HEK293 (cell line): ENCODE measurements at regions of chr1 and their contacts with region 1.

Region 1: DNA sequence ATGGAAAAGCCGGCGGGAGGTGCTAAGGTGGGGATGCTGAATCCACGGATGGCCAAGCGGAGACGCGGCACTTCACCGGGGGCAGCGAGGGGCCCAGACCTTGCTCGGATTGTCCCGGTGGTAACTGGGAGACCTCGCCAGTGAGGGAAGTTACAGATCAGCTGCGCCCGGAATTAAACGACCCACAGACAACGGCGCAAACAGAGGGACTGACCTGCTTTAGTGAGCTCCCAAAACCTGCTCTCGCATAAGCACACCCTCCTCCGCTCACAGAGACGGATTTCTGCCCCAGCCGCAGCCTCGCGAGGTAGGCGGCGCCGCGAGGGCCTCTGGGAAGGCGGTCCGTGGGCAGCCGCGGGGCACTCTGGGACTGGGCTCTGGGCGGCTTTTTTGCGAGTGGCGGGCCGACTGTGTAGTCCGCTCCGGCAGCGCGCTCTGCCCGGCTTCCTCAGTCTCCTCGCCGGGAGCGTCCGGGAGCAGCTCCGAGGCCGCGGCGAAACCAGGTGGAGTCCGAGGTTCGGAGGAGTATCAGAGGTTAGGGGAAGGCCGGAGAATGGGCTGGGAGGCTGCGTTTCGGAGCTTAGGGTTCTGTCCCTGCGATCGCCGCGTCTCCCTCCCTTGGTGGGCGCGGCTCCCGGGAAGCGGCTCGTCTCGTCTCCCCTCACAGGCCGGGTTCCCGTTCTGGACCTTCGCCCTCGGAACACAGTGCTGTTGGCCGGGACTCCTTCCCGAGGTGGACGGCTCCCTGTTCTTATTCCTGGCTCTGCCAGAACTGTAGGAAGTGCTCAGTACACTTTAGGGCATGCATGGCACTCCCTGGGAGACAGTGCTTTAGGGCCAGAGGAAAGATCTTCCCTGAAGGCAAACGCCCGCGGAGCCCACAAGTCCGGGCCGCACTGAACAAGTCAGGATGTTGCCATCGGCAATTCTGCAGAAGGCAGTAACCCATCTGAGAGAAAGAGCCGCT is at the start of gene EXO5:
- H3K4me3 ChIP-seq: peak within 1 kb of the TSS; percentile 69
- H3K27ac ChIP-seq: peak within 1 kb of the TSS; percentile 26; the same call in 1 of the 2 replicates
- H3K4me1 ChIP-seq: no peaks in the 10 kb centered on the region
- CTCF ChIP-seq: 0 out of 2 replicates have a peak, but pooled peaks have one; percentile 18

Region 2: GRCh38 chr1:40449684-40450494 is 58.8 kb before region 1 on chr1 and contains the start of gene ZFP69B:
- CTCF ChIA-PET with region 1: no interaction called
- POLR2A ChIA-PET with region 1: interaction called, 11 read pairs
- H3K4me3 ChIP-seq: peak within 1 kb of the TSS; percentile 59
- H3K27ac ChIP-seq: peak within 1 kb of the TSS; percentile 13; the same call in 1 of the 2 replicates
- H3K4me1 ChIP-seq: no peaks in the 10 kb centered on the region
- CTCF ChIP-seq: 0 out of 2 replicates have a peak, but pooled peaks have one; percentile 65

Region 3: DNA sequence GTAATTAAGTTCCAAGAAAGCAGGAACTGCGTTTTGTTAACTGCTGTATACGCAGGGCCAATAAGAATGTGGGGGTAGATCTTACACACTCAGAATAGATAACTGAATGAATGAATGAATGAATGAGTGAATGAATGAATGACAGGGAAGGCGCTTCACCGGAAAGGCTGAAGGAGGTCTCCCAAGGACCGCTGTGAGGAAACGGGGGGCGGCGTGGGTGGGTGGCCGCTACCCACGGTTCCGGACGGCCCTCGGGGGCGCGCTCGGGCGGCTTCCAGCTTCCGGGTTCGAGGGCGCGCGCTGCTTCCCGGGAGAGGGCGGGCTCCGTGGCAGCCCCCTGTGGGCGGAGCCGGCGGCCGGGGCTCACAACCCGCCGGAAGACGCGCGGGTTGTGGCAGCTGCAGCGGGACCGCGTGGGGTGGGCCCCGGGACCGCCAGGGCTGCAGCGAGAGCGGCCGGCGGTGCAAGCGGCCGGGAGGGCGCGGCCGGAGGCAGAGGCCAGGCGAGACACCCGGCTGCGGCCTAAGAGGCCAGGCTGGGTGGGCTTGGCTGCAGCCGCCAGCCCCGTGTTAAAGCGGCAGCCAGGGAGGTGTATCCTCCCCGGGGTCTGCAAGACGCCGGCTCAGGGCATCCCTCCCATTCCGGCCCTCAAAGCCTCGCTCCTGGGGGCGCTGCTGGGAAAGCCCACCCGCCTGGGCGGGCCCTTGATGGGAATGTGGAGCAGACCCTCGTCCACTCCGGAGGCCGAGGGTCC is 31.6 kb before region 1 on chr1 and contains the start of gene ZFP69:
- CTCF ChIA-PET with region 1: no interaction called
- POLR2A ChIA-PET with region 1: interaction called, 13 read pairs
- H3K4me3 ChIP-seq: peak within 1 kb of the TSS; percentile 55
- H3K27ac ChIP-seq: peak within 1 kb of the TSS; percentile 28; the same call in 1 of the 2 replicates
- H3K4me1 ChIP-seq: no peaks in the 10 kb centered on the region
- CTCF ChIP-seq: peak; percentile 12; the same call in 1 of the 2 replicates

Region 4: GRCh38 chr1:40531381-40532061 is 22.9 kb after region 1 on chr1 and contains the start of gene ZNF684:
- CTCF ChIA-PET with region 1: interaction called, 4 read pairs
- POLR2A ChIA-PET with region 1: interaction called, 17 read pairs
- H3K4me3 ChIP-seq: peak within 1 kb of the TSS; percentile 66
- H3K27ac ChIP-seq: peak within 1 kb of the TSS; percentile 38; the same call in 1 of the 2 replicates
- H3K4me1 ChIP-seq: no peaks in the 10 kb centered on the region
- CTCF ChIP-seq: no peak

Region 5: DNA sequence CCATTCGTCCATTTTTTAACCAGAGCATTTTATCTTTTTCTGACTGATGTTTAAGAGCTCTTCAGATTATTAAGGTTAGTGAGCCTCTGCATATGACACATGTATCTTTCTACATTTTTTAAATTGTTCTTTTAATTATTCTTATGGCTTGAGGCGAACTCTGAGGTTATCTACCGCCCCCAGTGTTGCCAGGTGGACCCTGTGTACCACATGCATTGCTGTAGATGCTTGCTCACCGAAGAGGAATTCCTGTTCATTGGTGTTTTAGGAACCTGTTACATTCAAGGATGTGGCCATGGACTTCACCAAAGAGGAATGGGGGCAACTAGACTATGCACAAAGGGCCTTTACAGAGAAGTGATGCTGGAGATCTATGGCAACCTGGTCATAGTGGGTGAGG is 54.6 kb after region 1 on chr1:
- CTCF ChIA-PET with region 1: no interaction called
- POLR2A ChIA-PET with region 1: no interaction called
- H3K4me3 ChIP-seq: no peak overlapping the region
- H3K27ac ChIP-seq: no peak overlapping the region
- H3K4me1 ChIP-seq: no peaks in the 10 kb centered on the region
- CTCF ChIP-seq: no peak